ENCODE measurements at regions of chr19 and their contacts with region 1.

Region 1: DNA sequence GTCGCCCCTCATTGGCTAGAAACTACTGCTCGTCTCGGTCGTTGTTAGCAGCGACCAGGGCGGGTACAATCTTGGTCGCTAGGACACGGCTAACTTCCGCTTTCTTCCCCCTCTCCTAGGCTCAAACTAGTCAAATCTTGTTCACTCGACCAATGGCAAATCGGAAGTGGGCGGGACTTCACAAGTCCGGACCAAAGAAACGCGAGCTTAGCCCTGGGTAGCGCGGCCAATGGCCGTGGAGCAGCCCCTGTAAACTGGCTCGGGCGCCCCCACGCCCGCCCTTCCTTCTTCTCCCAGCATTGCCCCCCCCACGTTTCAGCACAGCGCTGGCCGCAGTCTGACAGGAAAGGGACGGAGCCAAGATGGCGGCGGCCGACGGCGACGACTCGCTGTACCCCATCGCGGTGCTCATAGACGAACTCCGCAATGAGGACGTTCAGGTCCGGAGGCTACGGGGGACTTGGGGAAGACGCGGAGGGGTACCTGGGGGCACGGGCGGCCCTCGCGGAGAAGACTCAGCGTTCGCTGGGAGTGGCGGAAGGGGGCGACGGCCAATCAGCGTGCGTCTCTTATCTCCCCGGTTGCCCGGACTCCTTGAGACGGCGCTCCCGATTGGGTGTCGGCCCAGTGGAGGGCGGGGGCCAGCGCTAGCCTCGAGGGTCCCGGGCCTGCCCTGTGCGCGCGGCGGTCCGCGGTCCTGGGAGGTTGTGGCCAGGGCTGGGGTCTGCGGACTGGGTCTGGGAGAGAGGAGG is at the start of gene PPP2R1A:
- DNase-seq: peak; percentile 98
- H3K4me3 Mint-ChIP-seq: peak within 1 kb of the TSS; percentile 96
- H3K27ac Mint-ChIP-seq: peak within 1 kb of the TSS; percentile 99
- H3K4me1 Mint-ChIP-seq: peaks cover 41% of the 10 kb centered on the region
- H3K27me3 Mint-ChIP-seq: no peaks in the 10 kb centered on the region
- total RNA-seq, gene PPP2R1A: 224 to 229 TPM

Region 2: DNA sequence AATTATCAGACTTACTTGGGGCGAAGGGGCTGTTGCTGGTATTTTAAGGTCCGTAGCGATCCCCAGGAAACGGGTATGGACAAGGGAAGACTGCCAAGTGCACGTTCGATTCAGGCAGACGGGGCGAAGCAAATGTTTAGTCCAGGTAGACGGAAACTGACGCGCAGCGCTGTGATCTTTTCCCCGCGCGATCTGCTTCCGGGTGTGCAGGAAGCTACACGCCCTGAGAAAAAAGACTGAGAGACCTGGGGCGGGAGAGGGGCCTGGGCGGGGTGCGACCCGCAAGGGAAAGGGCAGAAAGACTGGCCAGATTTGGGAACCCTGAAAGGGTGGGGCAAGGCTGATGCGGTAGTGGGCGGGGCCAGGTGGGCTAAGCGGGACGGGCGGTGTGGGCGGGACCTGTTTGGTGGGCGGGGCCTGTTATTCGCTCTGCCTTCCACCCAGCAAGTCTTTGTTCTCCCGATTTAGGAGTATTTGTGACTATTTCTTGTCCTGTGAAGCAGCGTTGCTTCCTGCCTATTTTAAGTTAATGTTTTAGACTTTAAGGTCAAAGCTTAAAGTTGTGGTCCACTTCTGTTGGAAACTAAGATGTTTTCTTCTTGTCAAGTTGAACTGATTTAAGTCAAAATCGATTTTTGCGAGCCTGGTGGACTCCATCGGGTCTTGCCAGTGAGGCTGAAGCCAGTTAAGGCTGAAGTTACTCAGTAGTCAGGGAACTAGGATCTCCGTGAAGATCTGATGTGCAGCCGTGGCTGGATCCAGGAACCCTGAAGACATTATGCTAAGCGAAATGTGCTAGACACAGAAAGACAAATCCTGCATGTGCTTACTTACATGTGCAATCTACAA is 18.4 kb before region 1 on chr19 and contains the start of gene ZNF836:
- CTCF ChIA-PET with region 1: no interaction called
- POLR2A ChIA-PET with region 1: interaction called, 10 read pairs
- intact Hi-C with region 1: loop called (anchors 1 kb)
- DNase-seq: peak; percentile 95
- H3K4me3 Mint-ChIP-seq: peak within 1 kb of the TSS; percentile 99
- H3K27ac Mint-ChIP-seq: peak within 1 kb of the TSS; percentile 86
- H3K4me1 Mint-ChIP-seq: peaks cover 23% of the 10 kb centered on the region
- H3K27me3 Mint-ChIP-seq: no peaks in the 10 kb centered on the region
- total RNA-seq, gene ZNF836: 8.2 to 12.8 TPM

Region 3: GRCh38 chr19:52227196-52227940 is 37.5 kb after region 1 on chr19:
- CTCF ChIA-PET with region 1: interaction called, 4 read pairs
- POLR2A ChIA-PET with region 1: interaction called, 10 read pairs
- intact Hi-C with region 1: loop called (anchors 1 kb)
- DNase-seq: peak; percentile 27
- H3K4me3 Mint-ChIP-seq: peak overlapping the region; percentile 5
- H3K27ac Mint-ChIP-seq: peak overlapping the region; percentile 96
- H3K4me1 Mint-ChIP-seq: peaks cover 43% of the 10 kb centered on the region
- H3K27me3 Mint-ChIP-seq: no peaks in the 10 kb centered on the region

Region 4: DNA sequence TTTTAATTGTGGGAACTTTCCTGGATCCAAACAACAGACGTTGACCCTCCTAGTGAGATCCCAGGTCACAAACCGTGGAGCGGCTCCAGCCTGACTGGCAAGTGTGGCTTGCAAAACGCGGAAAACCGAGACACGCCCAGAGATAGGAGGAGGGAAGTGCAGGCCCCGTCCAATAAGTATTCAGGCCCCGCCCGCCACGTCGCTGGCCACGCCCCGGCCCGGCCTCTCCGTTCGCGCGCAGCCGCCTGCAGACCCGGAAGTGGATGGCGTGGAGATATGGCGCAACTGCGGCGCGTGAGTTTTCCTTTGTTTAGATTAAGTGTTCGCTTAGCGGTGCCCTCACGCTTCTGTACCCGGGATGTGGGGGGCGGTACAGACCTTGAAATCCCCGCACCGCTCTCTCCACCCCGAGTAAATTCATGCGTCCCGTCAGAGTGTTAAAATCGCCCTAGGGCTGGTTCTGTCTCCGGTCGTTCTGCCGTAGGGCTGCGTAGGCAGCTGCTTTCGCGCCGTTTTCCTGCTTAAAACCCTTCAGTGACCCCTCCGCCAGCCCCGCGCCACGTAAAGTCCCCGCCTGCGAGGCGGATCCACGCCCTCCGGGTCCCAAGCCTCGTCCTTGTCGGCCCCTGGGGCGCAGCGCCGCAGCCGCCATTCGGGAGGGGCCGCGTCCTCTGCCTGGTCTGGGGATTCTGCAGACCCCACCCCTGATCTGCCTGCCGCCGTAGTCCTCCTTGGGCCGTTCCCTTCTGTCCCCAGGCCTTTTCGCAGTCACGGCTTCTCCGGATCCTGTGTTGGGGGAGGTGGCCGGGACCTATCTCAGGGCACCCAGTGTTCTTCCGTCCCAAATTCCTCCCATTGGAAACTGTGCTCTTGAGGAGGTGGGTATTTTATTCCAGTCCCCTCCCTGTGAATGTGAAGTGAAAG is 79.7 kb after region 1 on chr19 and contains the start of gene ZNF766:
- CTCF ChIA-PET with region 1: no interaction called
- POLR2A ChIA-PET with region 1: no interaction called
- intact Hi-C with region 1: loop called (anchors 2 kb)
- DNase-seq: peak; percentile 98
- H3K4me3 Mint-ChIP-seq: peak within 1 kb of the TSS; percentile 96
- H3K27ac Mint-ChIP-seq: peak within 1 kb of the TSS; percentile 95
- H3K4me1 Mint-ChIP-seq: peaks cover 37% of the 10 kb centered on the region
- H3K27me3 Mint-ChIP-seq: no peaks in the 10 kb centered on the region
- total RNA-seq, gene ZNF766: 21.6 to 23.2 TPM

Measured in activated CD4-positive, alpha-beta memory T cell treated with anti-CD3 and anti-CD28 coated beads for 36 hours (primary cell).